ENCODE measurements at regions of chr2 and their contacts with region 1.

Region 1: GRCh38 chr2:85728883-85729824 is 24.6 kb upstream of the ATOH8 start:
- DNase-seq: peak; percentile 95
- H3K4me3 ChIP-seq: peak overlapping the region in 1 of 8 donors; percentile 17
- H3K27ac ChIP-seq: peak overlapping the region in 1 of 8 donors; percentile 24
- H3K4me1 ChIP-seq: peaks cover 3 to 34% (median 18%) of the 10 kb centered on the region in 6 donors
- H3K27me3 ChIP-seq: peaks cover 0 to 26% (median 0%) of the 10 kb centered on the region in 7 donors
- CTCF ChIP-seq: peak; percentile 65 to 95 (median 89)
- POLR2A ChIP-seq: no peak

Region 2: DNA sequence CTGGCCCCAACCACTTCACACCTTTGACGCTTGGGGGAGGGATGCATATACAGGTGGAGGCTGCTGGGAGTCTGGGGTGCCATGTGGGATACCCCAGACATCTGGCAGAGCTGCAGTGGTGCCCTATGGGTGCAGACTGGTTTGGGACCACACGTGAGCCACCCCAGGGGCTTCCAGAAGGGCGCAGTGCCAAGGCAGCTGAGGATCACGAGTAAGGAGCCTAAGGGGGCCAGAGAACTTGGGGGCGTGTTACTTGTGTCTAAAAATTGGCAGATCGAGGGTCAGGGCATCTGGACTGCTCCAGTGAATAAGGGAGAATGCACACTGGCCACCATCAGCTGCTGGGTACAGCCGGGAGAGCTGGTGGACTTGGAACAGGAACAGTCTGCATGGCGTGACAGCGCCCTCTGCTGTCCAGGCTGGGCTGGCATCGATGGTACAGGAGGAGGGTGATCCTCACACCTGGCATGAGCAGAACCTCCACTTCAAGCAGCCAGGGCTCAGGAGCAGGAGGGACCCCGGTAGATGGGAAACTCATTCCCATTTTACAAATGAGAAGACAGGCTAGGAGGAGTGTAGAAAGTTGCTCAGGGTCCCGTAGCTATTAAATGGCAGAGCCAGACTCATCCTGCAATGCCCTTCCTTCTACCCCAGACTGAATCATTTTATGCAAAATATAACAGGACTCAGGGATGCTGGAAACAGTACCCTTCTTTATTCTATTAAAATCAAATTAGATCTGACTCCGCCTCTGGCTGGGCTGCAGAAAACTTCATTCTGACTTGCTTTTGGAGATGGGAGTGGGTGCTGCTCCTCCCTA is 85.0 kb after region 1 on chr2:
- intact Hi-C with region 1: loop called (anchors 5 kb)
- DNase-seq: peak; percentile 95
- H3K4me3 ChIP-seq: no peak overlapping the region
- H3K27ac ChIP-seq: no peak overlapping the region
- H3K4me1 ChIP-seq: peaks cover 0 to 9% (median 2%) of the 10 kb centered on the region in 6 donors
- H3K27me3 ChIP-seq: peaks cover 0 to 25% (median 0%) of the 10 kb centered on the region in 7 donors
- CTCF ChIP-seq: peak; percentile 79 to 94 (median 91)
- POLR2A ChIP-seq: no peak

Measured in spleen (tissue), 13 donors.